ENCODE measurements at regions of chr13 and their contacts with region 1.

Region 1: GRCh38 chr13:25901460-25902376 is 150.1 kb downstream of the SHISA2 start:
- DNase-seq: peak; percentile 60
- H3K4me3 Mint-ChIP-seq: peak overlapping the region; percentile 15
- H3K27ac Mint-ChIP-seq: peak overlapping the region; percentile 61
- H3K4me1 Mint-ChIP-seq: peaks cover 23% of the 10 kb centered on the region
- H3K27me3 Mint-ChIP-seq: peaks cover 6% of the 10 kb centered on the region

Region 2: GRCh38 chr13:25541434-25542123 is 360.1 kb before region 1 on chr13:
- intact Hi-C with region 1: no loop called
- DNase-seq: no peak
- H3K4me3 Mint-ChIP-seq: no peak overlapping the region
- H3K27ac Mint-ChIP-seq: no peak overlapping the region
- H3K4me1 Mint-ChIP-seq: no peaks in the 10 kb centered on the region
- H3K27me3 Mint-ChIP-seq: peaks cover 9% of the 10 kb centered on the region

Region 3: DNA sequence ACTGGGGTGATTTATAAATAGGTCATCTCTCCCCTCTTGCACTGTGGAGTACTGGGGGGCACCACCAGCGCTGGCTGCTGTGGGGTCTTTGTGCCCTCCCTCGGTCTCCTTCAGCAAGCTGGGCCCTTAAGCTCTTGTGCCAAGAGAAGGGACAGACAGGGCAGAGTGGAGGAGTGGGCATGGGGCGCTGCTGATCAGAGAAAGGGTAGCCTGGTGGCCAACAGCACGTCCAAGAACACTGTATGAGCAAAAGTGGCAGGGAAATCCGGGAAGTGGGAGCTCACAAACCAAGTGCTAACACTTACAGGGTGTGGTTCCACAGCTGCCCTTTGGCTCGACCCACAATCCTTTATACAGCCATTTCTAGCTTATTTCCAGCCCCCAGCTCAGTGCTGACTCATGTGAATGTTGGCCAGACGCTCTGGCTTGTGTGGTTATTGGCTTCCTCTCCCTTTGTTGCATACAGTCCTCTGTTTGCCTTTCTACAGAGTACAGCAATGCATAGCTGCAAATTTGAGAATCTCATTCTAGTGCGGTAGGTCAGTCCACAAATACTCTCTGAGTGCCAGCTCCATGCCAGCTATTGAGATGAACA is 148.7 kb before region 1 on chr13:
- intact Hi-C with region 1: loop called (anchors 2 kb)
- DNase-seq: peak; percentile 35
- H3K4me3 Mint-ChIP-seq: peak overlapping the region; percentile 35
- H3K27ac Mint-ChIP-seq: peak overlapping the region; percentile 32
- H3K4me1 Mint-ChIP-seq: peaks cover 46% of the 10 kb centered on the region
- H3K27me3 Mint-ChIP-seq: no peaks in the 10 kb centered on the region

Region 4: DNA sequence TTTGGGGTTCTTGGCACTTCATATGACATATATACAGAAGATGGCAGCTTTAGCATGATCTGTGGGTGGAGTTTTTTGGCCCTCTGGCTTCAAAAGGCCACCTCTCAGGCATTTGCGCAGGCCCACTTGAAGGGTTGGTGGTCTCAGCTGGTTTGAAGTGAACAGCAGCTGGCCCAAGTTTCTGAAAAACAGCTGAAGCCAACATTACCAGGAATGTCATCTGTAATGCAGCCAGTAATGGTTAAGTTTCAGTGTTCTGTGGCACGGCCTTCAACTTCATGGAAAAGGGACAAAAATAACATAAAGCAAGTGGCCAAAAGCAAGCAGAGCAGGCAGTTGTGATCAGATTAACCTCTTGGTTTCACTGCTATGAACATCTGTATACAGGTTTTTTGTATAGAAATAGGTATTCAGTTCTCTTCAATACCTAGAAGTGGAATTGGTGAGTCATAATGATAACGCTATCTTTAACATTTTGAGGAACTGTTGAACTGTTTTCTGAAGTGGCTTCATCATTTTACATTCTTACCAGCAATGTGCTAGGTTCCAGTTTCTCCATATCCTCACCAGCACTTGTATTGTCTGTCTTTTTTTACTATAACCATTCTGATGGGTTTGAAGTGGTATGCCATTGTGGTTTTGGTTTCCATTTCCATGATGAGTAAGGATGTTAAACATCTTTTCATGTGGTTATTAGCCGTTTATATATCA is 95.3 kb before region 1 on chr13:
- intact Hi-C with region 1: loop called (anchors 1 kb)
- DNase-seq: peak; percentile 11
- H3K4me3 Mint-ChIP-seq: peak overlapping the region; percentile 61
- H3K27ac Mint-ChIP-seq: peak overlapping the region; percentile 87
- H3K4me1 Mint-ChIP-seq: peaks cover 28% of the 10 kb centered on the region
- H3K27me3 Mint-ChIP-seq: no peaks in the 10 kb centered on the region

Region 5: DNA sequence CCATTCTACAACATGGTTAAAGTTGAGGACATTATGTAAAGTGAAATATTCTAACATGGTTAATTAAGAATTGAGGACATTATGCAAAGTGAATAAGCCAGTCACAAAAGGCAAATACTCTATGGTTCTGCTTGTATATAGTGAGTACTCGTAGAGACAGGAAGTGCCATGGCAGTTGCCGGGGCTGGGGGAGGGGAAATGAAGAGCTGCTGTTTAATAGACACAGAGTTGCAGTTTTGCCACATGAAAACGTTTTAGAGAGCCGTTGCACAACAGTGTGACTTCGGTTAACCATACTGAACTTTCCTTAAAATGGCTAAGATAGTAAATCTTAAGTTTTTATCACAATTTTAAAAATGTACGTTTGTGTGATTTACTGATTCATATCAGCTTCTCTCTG is 26.8 kb before region 1 on chr13:
- intact Hi-C with region 1: loop called (anchors 1 kb)
- DNase-seq: peak; percentile 44
- H3K4me3 Mint-ChIP-seq: peak overlapping the region; percentile 62
- H3K27ac Mint-ChIP-seq: peak overlapping the region; percentile 87
- H3K4me1 Mint-ChIP-seq: peaks cover 67% of the 10 kb centered on the region
- H3K27me3 Mint-ChIP-seq: peaks cover 2% of the 10 kb centered on the region

Region 6: GRCh38 chr13:25958986-25959385 is 57.3 kb after region 1 on chr13:
- intact Hi-C with region 1: loop called (anchors 5 kb)
- DNase-seq: no peak
- H3K4me3 Mint-ChIP-seq: no peak overlapping the region
- H3K27ac Mint-ChIP-seq: no peak overlapping the region
- H3K4me1 Mint-ChIP-seq: peaks cover 26% of the 10 kb centered on the region
- H3K27me3 Mint-ChIP-seq: no peaks in the 10 kb centered on the region

Region 7: DNA sequence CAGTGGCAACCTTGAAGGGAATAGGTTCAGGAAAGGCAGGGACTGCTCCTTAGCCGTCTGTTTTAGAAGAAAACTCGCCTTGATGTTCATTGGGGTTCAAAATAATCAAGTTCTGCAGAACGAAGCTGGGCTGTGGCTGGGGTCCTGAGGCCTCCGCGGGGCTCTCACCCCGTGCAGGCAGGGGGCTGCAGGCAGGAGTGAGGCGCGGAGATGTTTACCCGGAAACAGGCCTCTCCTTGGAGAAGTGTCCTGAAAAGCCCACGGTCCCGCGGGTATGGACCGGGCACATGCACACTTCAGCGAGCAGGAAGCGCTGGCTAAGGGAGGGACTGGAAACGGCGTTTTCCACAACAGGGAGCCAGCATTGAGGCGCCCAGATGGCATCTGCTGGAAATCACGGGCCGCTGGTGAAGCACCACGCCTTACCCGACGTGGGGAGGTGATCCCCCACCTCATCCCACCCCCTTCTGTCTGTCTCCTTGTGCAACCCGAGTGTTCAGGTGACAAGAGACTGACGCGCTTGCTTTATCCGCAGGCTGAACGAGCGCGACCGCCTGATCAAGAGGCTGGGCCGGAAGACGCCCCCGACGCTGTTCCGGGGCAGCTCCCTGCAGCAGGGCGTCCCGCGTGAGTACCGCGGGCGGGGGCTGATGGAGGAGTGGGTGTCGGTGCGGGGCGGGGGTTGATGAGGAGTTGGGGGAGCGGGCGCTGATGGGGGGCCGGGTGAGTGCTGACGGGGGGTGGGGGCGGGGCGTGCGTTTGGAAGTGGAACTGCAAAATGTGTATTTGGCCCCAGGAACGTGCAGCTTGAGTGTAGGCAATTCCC is 110.5 kb after region 1 on chr13:
- intact Hi-C with region 1: loop called (anchors 1 kb)
- DNase-seq: peak; percentile 56
- H3K4me3 Mint-ChIP-seq: peak overlapping the region; percentile 72
- H3K27ac Mint-ChIP-seq: peak overlapping the region; percentile 29
- H3K4me1 Mint-ChIP-seq: peaks cover 17% of the 10 kb centered on the region
- H3K27me3 Mint-ChIP-seq: no peaks in the 10 kb centered on the region

Region 8: DNA sequence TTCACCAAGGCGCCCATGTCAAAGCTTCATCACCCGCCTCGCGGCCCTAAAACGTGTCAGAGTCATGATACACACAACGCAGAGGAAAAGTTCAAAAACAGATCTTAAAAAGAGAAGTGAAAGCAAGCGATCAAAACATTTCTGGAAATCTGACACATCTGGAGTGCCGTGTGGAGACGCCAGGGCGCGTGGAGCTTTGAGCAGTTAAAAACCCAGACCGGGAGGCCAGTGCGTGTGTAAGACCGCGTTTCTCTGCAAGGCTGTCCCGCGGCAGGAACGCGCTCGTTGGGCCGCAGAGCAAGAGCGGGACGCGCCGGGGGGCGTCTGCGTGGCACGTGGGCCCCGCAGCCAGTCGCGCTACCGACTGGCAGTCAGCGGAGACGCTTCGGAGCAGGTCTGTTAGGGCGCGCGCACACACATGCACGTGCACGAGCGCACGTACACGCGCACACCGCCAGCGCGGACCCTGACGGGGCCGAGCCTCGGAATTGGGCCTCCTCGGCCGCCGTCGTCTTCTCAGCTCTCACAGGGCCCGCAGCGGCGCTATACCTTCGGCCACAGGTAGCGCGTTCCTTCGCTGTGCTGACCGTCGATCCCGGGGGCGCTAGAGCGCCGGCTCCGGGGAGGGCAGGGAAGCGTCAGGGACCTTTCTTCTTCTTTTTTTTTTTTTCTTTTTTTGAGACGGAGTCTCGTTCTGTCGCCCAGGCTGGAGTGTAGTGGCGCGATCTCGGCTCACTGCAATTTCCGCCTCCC is 284.6 kb after region 1 on chr13:
- intact Hi-C with region 1: loop called (anchors 10 kb)
- DNase-seq: peak; percentile 89
- H3K4me3 Mint-ChIP-seq: peak overlapping the region; percentile 86
- H3K27ac Mint-ChIP-seq: peak overlapping the region; percentile 97
- H3K4me1 Mint-ChIP-seq: peaks cover 25% of the 10 kb centered on the region
- H3K27me3 Mint-ChIP-seq: no peaks in the 10 kb centered on the region